Heart left ventricle (tissue), 16 donors: ENCODE measurements at regions of chr13 and their contacts with region 1.

Region 1: DNA sequence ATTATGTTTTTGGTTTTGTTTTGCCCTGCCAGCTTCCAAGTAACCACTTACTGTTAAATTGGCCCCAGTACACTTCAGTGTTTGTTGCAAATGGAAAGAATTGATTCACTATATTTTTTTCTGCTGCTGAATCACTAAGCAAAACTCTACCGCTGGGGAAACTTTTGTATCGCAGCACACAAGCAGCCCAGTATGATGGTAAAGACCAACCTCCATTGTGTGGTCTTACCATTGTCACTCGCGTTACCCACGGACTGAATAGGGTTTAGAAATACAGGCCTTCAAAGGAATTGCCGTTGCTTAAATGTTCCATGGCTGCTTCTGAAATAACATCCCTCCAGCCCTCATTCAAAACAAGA is 7.9 kb downstream of the SPATA13 start:
- DNase-seq: no peak
- ATAC-seq: no peak
- H3K4me3 ChIP-seq: no peak overlapping the region
- H3K27ac ChIP-seq: peak overlapping the region in 1 of 12 donors; percentile 9
- H3K4me1 ChIP-seq: peaks cover 0 to 11% (median 0%) of the 10 kb centered on the region in 12 donors
- H3K27me3 ChIP-seq: no peaks in the 10 kb centered on the region
- CTCF ChIP-seq: no peak
- POLR2A ChIP-seq: no peak

Region 2: GRCh38 chr13:23254506-23254905 is 913.9 kb before region 1 on chr13:
- intact Hi-C with region 1: no loop called
- DNase-seq: no peak
- ATAC-seq: no peak
- H3K4me3 ChIP-seq: no peak overlapping the region
- H3K27ac ChIP-seq: no peak overlapping the region
- H3K4me1 ChIP-seq: no peaks in the 10 kb centered on the region
- H3K27me3 ChIP-seq: no peaks in the 10 kb centered on the region
- CTCF ChIP-seq: no peak
- POLR2A ChIP-seq: no peak

Region 3: DNA sequence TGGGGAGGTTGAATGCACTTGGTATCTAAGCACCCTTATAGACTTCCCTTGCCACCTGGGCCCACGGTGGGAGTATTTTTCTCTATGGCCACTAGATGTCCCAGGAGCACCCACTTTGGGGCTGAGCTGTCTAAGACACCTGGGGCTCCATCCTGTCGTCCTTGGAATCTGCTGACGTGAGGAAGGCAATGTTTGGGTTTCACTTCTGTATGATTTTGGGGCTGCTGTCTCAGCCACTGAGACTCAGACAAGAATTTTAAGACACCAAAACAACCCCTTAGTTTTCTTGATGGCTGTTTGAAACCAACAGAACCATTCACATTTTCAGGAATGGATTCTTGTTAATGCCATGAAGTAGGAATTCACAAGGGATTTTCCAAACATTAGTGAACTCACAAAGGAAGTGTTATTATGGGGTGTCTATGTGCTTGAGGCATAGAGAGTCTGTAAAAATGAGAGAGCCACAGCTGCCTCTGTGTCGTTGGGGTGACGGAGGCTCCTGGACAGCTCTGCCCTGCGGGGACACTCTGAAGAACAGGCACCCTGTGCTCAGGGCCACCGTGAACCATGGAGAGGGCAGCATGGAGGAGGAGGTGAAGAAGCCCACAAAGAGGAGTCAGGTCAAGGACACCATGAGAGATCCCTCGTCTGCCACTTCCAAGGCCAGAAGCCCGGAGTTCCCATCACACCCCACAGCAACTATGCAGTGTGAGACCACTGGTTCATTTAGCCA is 114.7 kb before region 1 on chr13:
- intact Hi-C with region 1: loop called in 5 of 10 experiments (anchors 5 to 10 kb)
- DNase-seq: peak in 2 of 5 donors; percentile 39 to 40
- ATAC-seq: peak; percentile 56 to 84 (median 76)
- H3K4me3 ChIP-seq: peak overlapping the region in 4 of 12 donors; percentile 3 to 32 (median 20)
- H3K27ac ChIP-seq: peak overlapping the region; percentile 11 to 78 (median 54)
- H3K4me1 ChIP-seq: peaks cover 0 to 35% (median 17%) of the 10 kb centered on the region in 12 donors
- H3K27me3 ChIP-seq: no peaks in the 10 kb centered on the region
- CTCF ChIP-seq: peak; percentile 55 to 74 (median 66)
- POLR2A ChIP-seq: no peak